Sigmoid colon (tissue), 7 donors: ENCODE measurements at regions of chr1 and their contacts with region 1.

Region 1: GRCh38 chr1:19974822-19975416 is 4.5 kb downstream of the PLA2G2A start:
- DNase-seq: no peak
- H3K4me3 ChIP-seq: no peak overlapping the region
- H3K27ac ChIP-seq: peak overlapping the region in 1 of 4 donors; percentile 18
- H3K4me1 ChIP-seq: peaks cover 0 to 18% (median 13%) of the 10 kb centered on the region in 4 donors
- H3K27me3 ChIP-seq: no peaks in the 10 kb centered on the region
- CTCF ChIP-seq: peak; percentile 66 to 84 (median 75)
- EP300 ChIP-seq: no peak
- POLR2A ChIP-seq: no peak

Region 2: DNA sequence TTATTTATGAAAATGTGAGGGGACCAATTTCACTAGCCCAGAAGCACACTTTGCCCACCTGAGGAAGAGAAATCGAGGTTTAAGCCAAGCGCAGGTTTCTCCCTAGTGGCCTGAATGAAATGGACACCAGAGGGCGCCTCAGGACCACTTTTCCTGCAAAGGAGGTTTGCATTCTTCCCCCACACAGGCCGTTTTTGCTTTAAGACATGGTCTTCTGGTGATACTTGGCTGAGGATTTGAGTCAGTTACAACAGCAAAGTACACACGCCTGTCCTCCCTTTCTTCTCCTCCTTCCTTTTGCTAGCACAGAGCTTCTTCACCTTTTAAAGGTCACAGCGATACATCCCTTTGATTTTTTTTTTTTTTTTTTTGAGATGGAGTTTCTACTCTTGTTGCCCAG is 56.9 kb before region 1 on chr1:
- intact Hi-C with region 1: loop called (anchors 2 kb)
- DNase-seq: peak; percentile 89
- H3K4me3 ChIP-seq: no peak overlapping the region
- H3K27ac ChIP-seq: no peak overlapping the region
- H3K4me1 ChIP-seq: no peaks in the 10 kb centered on the region
- H3K27me3 ChIP-seq: no peaks in the 10 kb centered on the region
- CTCF ChIP-seq: peak; percentile 72 to 88 (median 85)
- EP300 ChIP-seq: no peak
- POLR2A ChIP-seq: no peak

Region 3: DNA sequence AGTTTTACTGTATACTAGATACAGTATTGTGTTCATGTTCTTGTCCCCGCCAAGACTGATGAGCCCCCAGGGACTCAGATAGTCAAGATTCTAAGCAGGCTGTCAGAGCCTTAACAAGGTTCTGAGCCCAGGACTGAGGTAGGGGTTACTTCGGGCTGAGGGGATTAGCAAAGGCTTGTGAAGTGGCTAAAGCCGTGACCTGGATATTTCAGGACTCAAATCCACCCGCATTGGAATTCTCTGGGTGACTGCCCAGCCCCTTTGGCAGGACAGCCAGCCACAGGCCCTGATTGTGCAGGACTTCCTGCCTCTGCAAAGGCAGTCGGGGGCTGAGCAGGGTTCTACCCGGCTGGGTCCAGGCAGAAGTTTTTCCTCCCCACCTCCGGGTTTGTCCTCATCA is 95.0 kb after region 1 on chr1 and contains the start of gene PLA2G5:
- intact Hi-C with region 1: loop called (anchors 2 kb)
- DNase-seq: peak; percentile 86
- H3K4me3 ChIP-seq: peak within 1 kb of the TSS; percentile 17 to 50 (median 46)
- H3K27ac ChIP-seq: peak within 1 kb of the TSS; percentile 84 to 90 (median 85)
- H3K4me1 ChIP-seq: peaks cover 0 to 41% (median 38%) of the 10 kb centered on the region in 4 donors
- H3K27me3 ChIP-seq: no peaks in the 10 kb centered on the region
- CTCF ChIP-seq: no peak
- EP300 ChIP-seq: no peak
- POLR2A ChIP-seq: peak in 1 of 2 donors; percentile 35
- total RNA-seq, gene PLA2G5: 18.6 to 45.4 (median 30.5) TPM

Region 4: GRCh38 chr1:20137043-20137442 is 162.1 kb after region 1 on chr1:
- intact Hi-C with region 1: no loop called
- DNase-seq: peak; percentile 29
- H3K4me3 ChIP-seq: no peak overlapping the region
- H3K27ac ChIP-seq: no peak overlapping the region
- H3K4me1 ChIP-seq: no peaks in the 10 kb centered on the region
- H3K27me3 ChIP-seq: peaks cover 0 to 8% (median 0%) of the 10 kb centered on the region in 3 donors
- CTCF ChIP-seq: no peak
- EP300 ChIP-seq: no peak
- POLR2A ChIP-seq: no peak

Region 5: GRCh38 chr1:20151906-20152598 is 177.1 kb after region 1 on chr1:
- intact Hi-C with region 1: loop called (anchors 2 kb)
- DNase-seq: peak; percentile 93
- H3K4me3 ChIP-seq: peak overlapping the region; percentile 27 to 54 (median 42)
- H3K27ac ChIP-seq: peak overlapping the region in 3 of 4 donors; percentile 13 to 42 (median 32)
- H3K4me1 ChIP-seq: peaks cover 0 to 25% (median 13%) of the 10 kb centered on the region in 4 donors
- H3K27me3 ChIP-seq: no peaks in the 10 kb centered on the region
- CTCF ChIP-seq: peak; percentile 93 to 97 (median 94)
- EP300 ChIP-seq: no peak
- POLR2A ChIP-seq: no peak

Region 6: DNA sequence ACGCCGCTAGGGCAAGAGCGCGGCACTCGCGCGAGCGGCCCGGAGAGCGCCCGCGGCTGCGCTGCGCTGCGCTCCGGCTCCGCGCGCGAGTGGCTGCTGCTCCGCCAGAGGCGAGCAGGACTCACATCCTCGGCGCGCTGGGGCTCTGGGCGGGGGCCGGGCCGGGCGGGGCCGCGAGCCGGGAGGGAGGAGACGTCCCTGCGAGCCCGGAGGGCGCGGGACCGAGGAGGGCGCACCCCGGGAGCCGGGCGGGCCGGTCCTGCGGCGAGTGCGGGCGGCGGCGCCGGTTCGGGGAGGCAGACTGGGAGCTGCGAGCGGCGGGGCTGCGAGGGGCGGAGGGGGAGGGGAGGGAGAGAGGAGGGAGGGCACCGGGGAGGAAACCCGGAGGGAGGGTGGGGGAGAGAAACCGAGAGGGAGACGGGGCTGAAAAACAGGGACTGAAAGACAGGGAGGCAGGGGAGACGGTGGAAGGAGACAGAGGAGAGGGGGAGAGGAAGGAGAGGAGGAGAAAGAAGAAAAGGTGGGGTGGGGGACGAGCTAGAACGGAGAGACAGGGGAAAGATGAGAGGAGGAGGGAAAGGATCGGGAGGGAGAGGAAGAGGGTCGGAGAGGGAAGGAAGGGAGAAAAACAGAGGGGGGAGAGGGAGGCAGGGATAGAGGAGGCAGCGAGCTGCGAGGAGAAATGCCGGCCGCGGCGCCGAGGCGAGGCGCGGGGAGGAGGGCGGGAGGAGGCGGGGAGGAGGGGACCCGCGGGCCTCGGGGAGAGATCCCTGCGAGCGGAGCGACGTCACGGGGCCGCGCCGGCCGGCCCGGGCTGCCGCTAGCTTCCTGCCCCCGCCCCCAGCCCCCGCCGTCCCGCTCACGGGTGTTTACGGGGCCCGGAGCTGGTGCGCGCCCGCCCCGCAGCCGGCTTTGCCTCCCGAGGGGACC is 510.9 kb after region 1 on chr1 and contains the start of gene CAMK2N1:
- intact Hi-C with region 1: loop called (anchors 10 kb)
- DNase-seq: peak; percentile 93
- H3K4me3 ChIP-seq: peak within 1 kb of the TSS; percentile 49 to 83 (median 80)
- H3K27ac ChIP-seq: peak within 1 kb of the TSS; percentile 89 to 97 (median 92)
- H3K4me1 ChIP-seq: peaks cover 0 to 57% (median 37%) of the 10 kb centered on the region in 4 donors
- H3K27me3 ChIP-seq: no peaks in the 10 kb centered on the region
- CTCF ChIP-seq: no peak
- EP300 ChIP-seq: no peak
- POLR2A ChIP-seq: peak in 1 of 2 donors; percentile 63
- total RNA-seq, gene CAMK2N1: 18.3 to 31.9 (median 28.0) TPM

Region 7: GRCh38 chr1:20507564-20508410 is 532.9 kb after region 1 on chr1 and contains the start of gene MUL1:
- intact Hi-C with region 1: loop called (anchors 5 kb)
- DNase-seq: peak; percentile 97
- H3K4me3 ChIP-seq: peak within 1 kb of the TSS; percentile 68 to 96 (median 83)
- H3K27ac ChIP-seq: peak within 1 kb of the TSS; percentile 83 to 93 (median 88)
- H3K4me1 ChIP-seq: peaks cover 0 to 48% (median 37%) of the 10 kb centered on the region in 4 donors
- H3K27me3 ChIP-seq: no peaks in the 10 kb centered on the region
- CTCF ChIP-seq: no peak
- EP300 ChIP-seq: no peak
- POLR2A ChIP-seq: peak; percentile 72 to 76
- total RNA-seq, gene MUL1: 26.8 to 34.1 (median 32.6) TPM